CD8-positive, alpha-beta T cell (primary cell): ENCODE measurements at regions of chr14 and their contacts with region 1.

Region 1: GRCh38 chr14:75560962-75561432 is 17.4 kb upstream of the FLVCR2 start:
- DNase-seq: peak in 7 of 9 experiments; percentile 25 to 74 (median 56)
- ATAC-seq: peak; percentile 36
- H3K4me3 ChIP-seq: no peak overlapping the region
- H3K4me3 Mint-ChIP-seq: no peak overlapping the region
- H3K27ac ChIP-seq: no peak overlapping the region
- H3K27ac Mint-ChIP-seq: no peak overlapping the region
- H3K4me1 ChIP-seq: peaks cover 8% of the 10 kb centered on the region
- H3K4me1 Mint-ChIP-seq: peaks cover 15% of the 10 kb centered on the region
- H3K27me3 ChIP-seq: no peaks in the 10 kb centered on the region
- H3K27me3 Mint-ChIP-seq: no peaks in the 10 kb centered on the region
- CTCF ChIP-seq: peak; percentile 51

Region 2: GRCh38 chr14:75132382-75133086 is 428.5 kb before region 1 on chr14:
- CTCF ChIA-PET with region 1: interaction called, 3 read pairs
- POLR2A ChIA-PET with region 1: no interaction called
- intact Hi-C with region 1: loop called (anchors 5 to 10 kb)
- DNase-seq: peak in 6 of 9 experiments; percentile 28 to 86 (median 54)
- ATAC-seq: peak; percentile 91
- H3K4me3 ChIP-seq: no peak overlapping the region
- H3K4me3 Mint-ChIP-seq: no peak overlapping the region
- H3K27ac ChIP-seq: no peak overlapping the region
- H3K27ac Mint-ChIP-seq: peak overlapping the region; percentile 12
- H3K4me1 ChIP-seq: peaks cover 3% of the 10 kb centered on the region
- H3K4me1 Mint-ChIP-seq: peaks cover 18% of the 10 kb centered on the region
- H3K27me3 ChIP-seq: no peaks in the 10 kb centered on the region
- H3K27me3 Mint-ChIP-seq: no peaks in the 10 kb centered on the region
- CTCF ChIP-seq: peak; percentile 79

Region 3: GRCh38 chr14:75278422-75279161 is 282.4 kb before region 1 on chr14 and contains the start of gene FOS:
- CTCF ChIA-PET with region 1: no interaction called
- POLR2A ChIA-PET with region 1: no interaction called
- intact Hi-C with region 1: no loop called
- DNase-seq: peak; percentile 81 to 98 (median 91)
- ATAC-seq: peak; percentile 67
- H3K4me3 ChIP-seq: peak within 1 kb of the TSS; percentile 77 to 89
- H3K4me3 Mint-ChIP-seq: peak within 1 kb of the TSS; percentile 97
- H3K27ac ChIP-seq: peak within 1 kb of the TSS; percentile 81 to 90
- H3K27ac Mint-ChIP-seq: peak within 1 kb of the TSS; percentile 98
- H3K4me1 ChIP-seq: peaks cover 55% of the 10 kb centered on the region
- H3K4me1 Mint-ChIP-seq: peaks cover 47% of the 10 kb centered on the region
- H3K27me3 ChIP-seq: peaks cover 10 to 38% of the 10 kb centered on the region in 2 experiments
- H3K27me3 Mint-ChIP-seq: peaks cover 17% of the 10 kb centered on the region
- CTCF ChIP-seq: no peak
- total RNA-seq, gene FOS: 1,826 to 1,941 TPM

Region 4: GRCh38 chr14:75497191-75497590 is 63.8 kb before region 1 on chr14:
- CTCF ChIA-PET with region 1: interaction called, 12 read pairs
- POLR2A ChIA-PET with region 1: no interaction called
- intact Hi-C with region 1: no loop called
- DNase-seq: peak in 4 of 9 experiments; percentile 20 to 63 (median 34)
- ATAC-seq: peak; percentile 65
- H3K4me3 ChIP-seq: no peak overlapping the region
- H3K4me3 Mint-ChIP-seq: no peak overlapping the region
- H3K27ac ChIP-seq: no peak overlapping the region
- H3K27ac Mint-ChIP-seq: no peak overlapping the region
- H3K4me1 ChIP-seq: no peaks in the 10 kb centered on the region
- H3K4me1 Mint-ChIP-seq: peaks cover 13% of the 10 kb centered on the region
- H3K27me3 ChIP-seq: no peaks in the 10 kb centered on the region
- H3K27me3 Mint-ChIP-seq: no peaks in the 10 kb centered on the region
- CTCF ChIP-seq: no peak

Region 5: DNA sequence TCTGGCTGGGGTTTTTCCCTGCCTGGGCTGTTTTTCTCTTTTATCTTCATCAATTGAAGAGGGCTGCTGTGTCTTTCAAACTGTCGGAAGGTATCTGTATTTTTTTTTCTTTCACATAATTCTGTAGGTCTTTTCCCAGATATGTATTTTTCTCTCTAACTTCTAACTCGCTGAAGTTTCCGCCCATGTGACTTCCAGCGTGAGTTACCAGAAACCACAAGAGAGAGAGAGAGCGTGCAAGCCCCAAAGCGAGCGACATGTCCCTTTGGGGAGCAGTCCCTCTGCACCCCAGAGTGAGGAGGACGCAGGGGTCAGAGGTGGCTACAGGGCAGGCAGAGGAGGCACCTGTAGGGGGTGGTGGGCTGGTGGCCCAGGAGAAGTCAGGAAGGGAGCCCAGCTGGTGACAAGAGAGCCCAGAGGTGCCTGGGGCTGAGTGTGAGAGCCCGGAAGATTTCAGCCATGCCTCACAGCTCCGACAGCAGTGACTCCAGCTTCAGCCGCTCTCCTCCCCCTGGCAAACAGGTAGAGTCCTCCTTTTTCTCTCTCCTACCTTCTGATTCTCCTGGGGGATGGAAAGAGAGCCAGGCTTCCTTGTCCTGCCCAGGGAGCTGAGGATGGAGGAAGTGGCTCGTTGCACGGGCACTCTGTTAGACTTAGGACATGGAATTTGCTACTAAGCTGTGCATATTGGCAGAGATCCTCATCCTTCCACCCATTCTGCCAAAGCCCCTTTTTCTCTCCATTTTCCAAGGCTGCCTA is 38.6 kb before region 1 on chr14 and contains the start of gene BATF:
- CTCF ChIA-PET with region 1: interaction called, 16 read pairs
- POLR2A ChIA-PET with region 1: interaction called, 3 read pairs
- intact Hi-C with region 1: loop called (anchors 2 kb)
- DNase-seq: peak; percentile 37 to 90 (median 73)
- ATAC-seq: peak; percentile 77
- H3K4me3 ChIP-seq: peak within 1 kb of the TSS; percentile 75 to 79
- H3K4me3 Mint-ChIP-seq: peak within 1 kb of the TSS; percentile 98
- H3K27ac ChIP-seq: peak within 1 kb of the TSS; percentile 46 to 93
- H3K27ac Mint-ChIP-seq: peak within 1 kb of the TSS; percentile 93
- H3K4me1 ChIP-seq: peaks cover 53% of the 10 kb centered on the region
- H3K4me1 Mint-ChIP-seq: peaks cover 66% of the 10 kb centered on the region
- H3K27me3 ChIP-seq: no peaks in the 10 kb centered on the region
- H3K27me3 Mint-ChIP-seq: no peaks in the 10 kb centered on the region
- CTCF ChIP-seq: no peak
- total RNA-seq, gene BATF: 3.2 to 4.3 TPM

Region 6: GRCh38 chr14:75577729-75578101 is 16.7 kb after region 1 on chr14:
- CTCF ChIA-PET with region 1: interaction called, 38 read pairs
- POLR2A ChIA-PET with region 1: interaction called, 3 read pairs
- intact Hi-C with region 1: no loop called
- DNase-seq: peak; percentile 34 to 79 (median 69)
- ATAC-seq: peak; percentile 80
- H3K4me3 ChIP-seq: peak overlapping the region; percentile 64 to 72
- H3K4me3 Mint-ChIP-seq: peak overlapping the region; percentile 91
- H3K27ac ChIP-seq: no peak overlapping the region
- H3K27ac Mint-ChIP-seq: peak overlapping the region; percentile 53
- H3K4me1 ChIP-seq: peaks cover 10% of the 10 kb centered on the region
- H3K4me1 Mint-ChIP-seq: peaks cover 23% of the 10 kb centered on the region
- H3K27me3 ChIP-seq: no peaks in the 10 kb centered on the region
- H3K27me3 Mint-ChIP-seq: no peaks in the 10 kb centered on the region
- CTCF ChIP-seq: peak; percentile 62